Aorta (tissue), 5 donors: ENCODE measurements at regions of chr13 and their contacts with region 1.

Region 1: DNA sequence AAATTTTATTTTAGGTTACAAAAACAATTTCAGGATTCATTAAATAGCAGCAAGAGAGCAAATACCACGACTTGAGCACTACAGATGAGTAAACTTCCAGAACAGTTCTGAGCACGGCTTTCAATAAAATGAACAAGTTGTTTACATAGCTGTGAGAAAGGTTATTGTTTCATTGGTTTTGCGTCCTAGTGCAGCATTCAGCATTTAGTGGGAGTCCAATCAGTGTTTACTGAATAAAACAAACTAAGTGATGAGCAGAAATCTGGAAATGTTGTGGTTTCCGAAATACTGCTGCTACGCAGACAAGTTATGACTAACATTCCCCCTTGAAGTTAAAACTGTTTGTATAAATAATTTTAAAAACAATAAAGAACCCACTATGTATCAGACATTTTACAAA is 251.5 kb upstream of the STARD13 start:
- DNase-seq: no peak
- ATAC-seq: no peak
- H3K4me3 ChIP-seq: no peak overlapping the region
- H3K27ac ChIP-seq: peak overlapping the region in 1 of 2 donors; percentile 43
- H3K4me1 ChIP-seq: peaks cover 2 to 7% of the 10 kb centered on the region in 2 donors
- H3K27me3 ChIP-seq: no peaks in the 10 kb centered on the region

Region 2: GRCh38 chr13:33494596-33495204 is 42.3 kb before region 1 on chr13:
- intact Hi-C with region 1: loop called (anchors 5 kb)
- DNase-seq: peak in 1 of 2 donors; percentile 49
- ATAC-seq: peak; percentile 65
- H3K4me3 ChIP-seq: no peak overlapping the region
- H3K27ac ChIP-seq: no peak overlapping the region
- H3K4me1 ChIP-seq: peaks cover 5 to 13% of the 10 kb centered on the region in 2 donors
- H3K27me3 ChIP-seq: no peaks in the 10 kb centered on the region